CD4-positive, alpha-beta T cell (primary cell): ENCODE measurements at regions of chr4 and their contacts with region 1.

Region 1: GRCh38 chr4:152255437-152256011 is 280.4 kb downstream of the FBXW7 start:
- DNase-seq: peak; percentile 19 to 88 (median 62)
- ATAC-seq: peak; percentile 95
- H3K4me3 ChIP-seq: no peak overlapping the region
- H3K4me3 Mint-ChIP-seq: no peak overlapping the region
- H3K27ac ChIP-seq: peak overlapping the region in 1 of 2 donors; percentile 28
- H3K27ac Mint-ChIP-seq: no peak overlapping the region
- H3K4me1 ChIP-seq: peaks cover 41% of the 10 kb centered on the region
- H3K4me1 Mint-ChIP-seq: peaks cover 4% of the 10 kb centered on the region
- H3K27me3 ChIP-seq: no peaks in the 10 kb centered on the region
- H3K27me3 Mint-ChIP-seq: no peaks in the 10 kb centered on the region
- CTCF ChIP-seq: no peak

Region 2: GRCh38 chr4:152014280-152014679 is 241.2 kb before region 1 on chr4:
- CTCF ChIA-PET with region 1: no interaction called
- POLR2A ChIA-PET with region 1: no interaction called
- intact Hi-C with region 1: loop called in 1 of 2 experiments (anchors 5 kb)
- DNase-seq: peak in 11 of 14 experiments; percentile 13 to 73 (median 35)
- ATAC-seq: peak; percentile 26
- H3K4me3 ChIP-seq: no peak overlapping the region
- H3K4me3 Mint-ChIP-seq: no peak overlapping the region
- H3K27ac ChIP-seq: peak overlapping the region in 1 of 2 donors; percentile 17
- H3K27ac Mint-ChIP-seq: peak overlapping the region; percentile 74
- H3K4me1 ChIP-seq: peaks cover 51% of the 10 kb centered on the region
- H3K4me1 Mint-ChIP-seq: peaks cover 64% of the 10 kb centered on the region
- H3K27me3 ChIP-seq: no peaks in the 10 kb centered on the region
- H3K27me3 Mint-ChIP-seq: no peaks in the 10 kb centered on the region
- CTCF ChIP-seq: no peak

Region 3: GRCh38 chr4:152243896-152244595 is 11.5 kb before region 1 on chr4:
- CTCF ChIA-PET with region 1: no interaction called
- POLR2A ChIA-PET with region 1: interaction called, 36 read pairs
- intact Hi-C with region 1: no loop called
- DNase-seq: peak in 3 of 14 experiments; percentile 11 to 34 (median 27)
- ATAC-seq: no peak
- H3K4me3 ChIP-seq: no peak overlapping the region
- H3K4me3 Mint-ChIP-seq: no peak overlapping the region
- H3K27ac ChIP-seq: no peak overlapping the region
- H3K27ac Mint-ChIP-seq: peak overlapping the region; percentile 37
- H3K4me1 ChIP-seq: peaks cover 30% of the 10 kb centered on the region
- H3K4me1 Mint-ChIP-seq: peaks cover 52% of the 10 kb centered on the region
- H3K27me3 ChIP-seq: no peaks in the 10 kb centered on the region
- H3K27me3 Mint-ChIP-seq: no peaks in the 10 kb centered on the region
- CTCF ChIP-seq: no peak

Region 4: GRCh38 chr4:152771741-152772533 is 516.4 kb after region 1 on chr4:
- CTCF ChIA-PET with region 1: no interaction called
- POLR2A ChIA-PET with region 1: no interaction called
- intact Hi-C with region 1: no loop called
- DNase-seq: no peak
- ATAC-seq: no peak
- H3K4me3 ChIP-seq: no peak overlapping the region
- H3K4me3 Mint-ChIP-seq: no peak overlapping the region
- H3K27ac ChIP-seq: no peak overlapping the region
- H3K27ac Mint-ChIP-seq: no peak overlapping the region
- H3K4me1 ChIP-seq: no peaks in the 10 kb centered on the region
- H3K4me1 Mint-ChIP-seq: no peaks in the 10 kb centered on the region
- H3K27me3 ChIP-seq: no peaks in the 10 kb centered on the region
- H3K27me3 Mint-ChIP-seq: peaks cover 7% of the 10 kb centered on the region
- CTCF ChIP-seq: no peak